ENCODE measurements at regions of chr12 and their contacts with region 1.

Region 1: GRCh38 chr12:52221912-52222457 is 11.1 kb upstream of the KRT7 start:
- DNase-seq: peak; percentile 67
- ATAC-seq: peak; percentile 83
- H3K4me3 ChIP-seq: peak overlapping the region in 1 of 2 experiments; percentile 15; a peak in 1 of 4 replicates
- H3K27ac ChIP-seq: no peak overlapping the region
- H3K4me1 ChIP-seq: peaks cover 26 to 86% of the 10 kb centered on the region in 2 experiments
- H3K27me3 ChIP-seq: no peaks in the 10 kb centered on the region
- CTCF ChIP-seq: peak in 2 of 3 experiments; percentile 86 to 91; a peak in 4 of 6 replicates
- POLR2A ChIP-seq: no peak
- RAD21 ChIP-seq: no peak

Region 2: GRCh38 chr12:52235822-52236692 is 14.1 kb after region 1 on chr12:
- CTCF ChIA-PET with region 1: interaction called, 13 read pairs
- POLR2A ChIA-PET with region 1: interaction called, 4 read pairs
- RAD21 ChIA-PET with region 1: no interaction called
- intact Hi-C with region 1: no loop called
- DNase-seq: no peak
- ATAC-seq: peak; percentile 58
- H3K4me3 ChIP-seq: no peak overlapping the region
- H3K27ac ChIP-seq: no peak overlapping the region
- H3K4me1 ChIP-seq: peaks cover 12 to 95% of the 10 kb centered on the region in 2 experiments
- H3K27me3 ChIP-seq: no peaks in the 10 kb centered on the region
- CTCF ChIP-seq: no peak
- POLR2A ChIP-seq: no peak
- RAD21 ChIP-seq: no peak

Region 3: DNA sequence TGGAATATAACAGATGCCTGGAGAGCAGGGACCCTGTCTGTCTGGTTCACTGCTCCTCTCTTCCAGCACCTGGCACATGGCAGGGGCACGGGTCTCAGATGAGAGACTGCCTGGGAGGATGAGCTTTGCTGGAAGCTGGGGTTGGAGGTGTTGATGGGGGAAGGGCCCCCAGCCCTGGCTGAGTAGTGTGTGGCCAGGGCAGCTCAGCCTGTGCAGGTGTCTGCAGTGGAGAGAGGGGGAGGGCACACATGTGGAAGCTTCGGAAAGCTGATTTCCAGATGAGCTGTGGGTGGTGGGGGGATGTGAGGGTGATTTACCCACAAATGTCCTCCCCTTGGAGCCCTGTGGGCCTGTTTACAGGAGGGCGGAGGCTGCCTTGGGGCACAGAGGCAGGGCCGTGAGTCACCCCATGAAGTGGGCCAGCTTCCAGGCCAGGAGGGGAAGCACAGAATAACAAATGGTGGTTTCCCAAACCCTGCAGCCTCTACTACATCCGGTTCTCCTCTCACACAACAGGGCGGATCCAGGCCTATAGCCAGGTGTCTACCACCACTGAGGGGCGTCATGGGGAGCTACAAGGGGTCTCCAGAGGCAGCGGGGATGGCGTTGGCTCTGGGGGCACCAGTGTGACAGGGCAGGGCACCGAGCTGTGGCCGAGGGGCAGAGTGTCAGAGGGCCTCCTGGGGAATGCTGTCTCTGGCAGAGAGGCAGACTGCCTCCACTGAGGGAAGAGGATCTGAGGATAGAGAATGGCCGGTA is 22.1 kb after region 1 on chr12:
- CTCF ChIA-PET with region 1: interaction called, 10 read pairs
- POLR2A ChIA-PET with region 1: interaction called, 3 read pairs
- RAD21 ChIA-PET with region 1: no interaction called
- intact Hi-C with region 1: no loop called
- DNase-seq: no peak
- ATAC-seq: peak; percentile 78
- H3K4me3 ChIP-seq: peak overlapping the region; percentile 19 to 48
- H3K27ac ChIP-seq: peak overlapping the region; percentile 68
- H3K4me1 ChIP-seq: peaks cover 64 to 92% of the 10 kb centered on the region in 2 experiments
- H3K27me3 ChIP-seq: no peaks in the 10 kb centered on the region
- CTCF ChIP-seq: no peak
- POLR2A ChIP-seq: no peak
- RAD21 ChIP-seq: no peak

Measured in HCT116 (cell line).